ENCODE measurements at regions of chr12 and their contacts with region 1.

Region 1: DNA sequence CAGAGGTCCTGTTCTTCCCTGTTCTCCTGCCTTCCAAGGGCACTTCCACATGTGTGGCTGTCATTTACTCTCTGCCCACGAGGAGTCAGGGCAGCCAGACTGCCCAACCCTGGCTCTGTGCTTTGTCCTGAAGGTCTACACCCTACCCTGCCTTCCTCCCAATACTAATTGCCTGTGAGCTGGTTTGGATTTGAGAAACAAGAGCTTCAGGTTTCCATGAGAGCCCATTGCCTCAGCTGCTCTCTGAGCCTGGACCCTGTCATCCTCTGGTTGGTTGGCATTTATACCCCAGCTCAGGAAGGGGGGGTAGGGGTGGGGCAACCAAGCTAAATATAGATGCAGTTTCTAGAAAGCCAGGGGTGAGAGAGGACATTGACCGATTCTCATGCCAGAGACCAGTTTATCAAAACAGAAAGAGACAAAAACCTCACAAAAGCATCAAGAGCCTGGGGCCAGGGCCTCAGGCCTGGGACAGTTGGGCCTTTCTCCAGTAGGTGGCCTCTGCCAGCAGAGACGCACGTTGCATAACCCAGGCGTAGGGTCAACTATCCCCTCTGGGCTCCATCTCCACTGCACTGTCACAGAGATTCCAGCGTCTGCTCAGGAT is 34.5 kb downstream of the VDR start:
- DNase-seq: peak; percentile 82
- H3K4me3 ChIP-seq: no peak overlapping the region
- H3K27ac ChIP-seq: peak overlapping the region; percentile 49 to 77 (median 68)
- H3K4me1 ChIP-seq: peaks cover 0 to 20% (median 16%) of the 10 kb centered on the region in 4 donors
- H3K27me3 ChIP-seq: no peaks in the 10 kb centered on the region
- CTCF ChIP-seq: peak in 1 of 4 experiments; percentile 21
- EP300 ChIP-seq: peak in 1 of 4 donors; percentile 14
- POLR2A ChIP-seq: no peak

Region 2: DNA sequence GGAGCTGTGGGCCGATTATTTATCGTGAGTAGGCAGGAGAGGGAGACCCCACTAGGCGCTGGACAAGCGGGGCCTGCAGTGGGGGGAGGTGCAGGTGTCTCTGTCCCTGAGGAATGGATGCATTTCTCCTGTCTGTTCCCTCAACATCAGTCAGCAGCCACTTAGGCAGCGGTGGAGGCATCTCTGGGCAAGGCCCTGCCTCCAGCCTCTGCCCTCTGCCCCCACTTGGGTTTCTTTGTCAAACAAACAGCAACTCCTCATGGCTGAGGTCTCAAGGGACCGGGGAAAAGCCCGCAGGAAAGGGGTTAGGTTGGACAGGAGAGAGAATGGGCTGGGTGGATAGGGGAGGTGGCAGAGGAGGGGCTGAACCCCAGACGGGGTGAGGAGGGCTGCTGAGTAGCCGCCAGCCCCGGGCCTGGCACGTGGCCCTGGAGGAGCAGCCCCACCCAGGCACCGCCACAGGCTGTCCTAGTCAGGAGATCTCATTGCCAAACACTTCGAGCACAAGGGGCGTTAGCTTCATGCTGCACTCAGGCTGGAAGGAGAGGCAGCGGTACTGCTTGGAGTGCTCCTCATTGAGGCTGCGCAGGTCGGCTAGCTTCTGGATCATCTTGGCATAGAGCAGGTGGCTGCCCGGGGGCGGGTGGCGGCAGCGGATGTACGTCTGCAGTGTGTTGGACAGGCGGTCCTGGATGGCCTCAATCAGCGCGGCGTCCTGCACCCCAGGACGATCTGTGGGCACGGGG is 25.8 kb before region 1 on chr12:
- intact Hi-C with region 1: no loop called
- DNase-seq: no peak
- H3K4me3 ChIP-seq: no peak overlapping the region
- H3K27ac ChIP-seq: no peak overlapping the region
- H3K4me1 ChIP-seq: peaks cover 0 to 12% (median 10%) of the 10 kb centered on the region in 4 donors
- H3K27me3 ChIP-seq: no peaks in the 10 kb centered on the region
- CTCF ChIP-seq: no peak
- EP300 ChIP-seq: no peak
- POLR2A ChIP-seq: no peak

Region 3: GRCh38 chr12:47904713-47905310 is 34.5 kb after region 1 on chr12 and contains the start of gene VDR:
- intact Hi-C with region 1: loop called (anchors 1 kb)
- DNase-seq: peak; percentile 85
- H3K4me3 ChIP-seq: peak within 1 kb of the TSS; percentile 19 to 58 (median 49)
- H3K27ac ChIP-seq: peak within 1 kb of the TSS in 2 of 4 donors; percentile 7 to 63
- H3K4me1 ChIP-seq: peaks cover 0 to 30% (median 28%) of the 10 kb centered on the region in 4 donors
- H3K27me3 ChIP-seq: no peaks in the 10 kb centered on the region
- CTCF ChIP-seq: no peak
- EP300 ChIP-seq: no peak
- POLR2A ChIP-seq: peak in 1 of 2 donors; percentile 74
- total RNA-seq, gene VDR: 0.71 to 2.5 (median 1.5) TPM

Region 4: GRCh38 chr12:47949441-47950308 is 79.4 kb after region 1 on chr12:
- intact Hi-C with region 1: loop called (anchors 2 kb)
- DNase-seq: peak; percentile 86
- H3K4me3 ChIP-seq: no peak overlapping the region
- H3K27ac ChIP-seq: no peak overlapping the region
- H3K4me1 ChIP-seq: peaks cover 0 to 8% (median 6%) of the 10 kb centered on the region in 4 donors
- H3K27me3 ChIP-seq: no peaks in the 10 kb centered on the region
- CTCF ChIP-seq: peak; percentile 34 to 82 (median 71)
- EP300 ChIP-seq: no peak
- POLR2A ChIP-seq: no peak